Aorta (tissue), 5 donors: ENCODE measurements at regions of chr3 and their contacts with region 1.

Region 1: DNA sequence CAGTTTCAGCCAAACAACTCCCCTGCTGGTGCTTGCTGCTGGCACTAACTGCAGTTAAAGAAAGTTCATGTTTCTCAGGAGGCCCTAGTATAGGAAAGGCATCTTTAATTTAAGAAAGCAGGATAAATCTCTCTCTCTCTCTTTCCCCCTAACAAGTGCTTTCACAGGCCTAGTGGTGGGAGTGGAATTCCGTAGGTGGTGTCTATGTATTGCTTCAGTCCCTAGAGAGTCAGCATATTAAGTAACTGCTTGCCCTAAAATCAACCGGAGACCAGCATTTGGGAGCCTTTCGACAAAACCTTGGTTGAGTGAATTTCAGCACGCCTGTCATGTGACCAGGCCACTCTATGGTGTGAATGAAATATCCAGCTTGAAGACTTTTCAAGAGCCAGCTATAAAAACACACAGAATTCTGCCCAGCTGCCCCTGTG is 169.2 kb upstream of the TGFBR2 start:
- DNase-seq: peak in 1 of 2 donors; percentile 45
- ATAC-seq: peak; percentile 73
- H3K4me3 ChIP-seq: no peak overlapping the region
- H3K27ac ChIP-seq: peak overlapping the region; percentile 43 to 88
- H3K4me1 ChIP-seq: peaks cover 8 to 12% of the 10 kb centered on the region in 2 donors
- H3K27me3 ChIP-seq: no peaks in the 10 kb centered on the region

Region 2: GRCh38 chr3:30353711-30354467 is 83.3 kb before region 1 on chr3:
- intact Hi-C with region 1: loop called in 1 of 2 experiments (anchors 5 kb)
- DNase-seq: no peak
- ATAC-seq: peak; percentile 64
- H3K4me3 ChIP-seq: no peak overlapping the region
- H3K27ac ChIP-seq: peak overlapping the region; percentile 74 to 82
- H3K4me1 ChIP-seq: peaks cover 8 to 26% of the 10 kb centered on the region in 2 donors
- H3K27me3 ChIP-seq: no peaks in the 10 kb centered on the region

Region 3: GRCh38 chr3:30453360-30454039 is 16.3 kb after region 1 on chr3:
- intact Hi-C with region 1: no loop called
- DNase-seq: peak in 1 of 2 donors; percentile 47
- ATAC-seq: no peak
- H3K4me3 ChIP-seq: no peak overlapping the region
- H3K27ac ChIP-seq: no peak overlapping the region
- H3K4me1 ChIP-seq: no peaks in the 10 kb centered on the region
- H3K27me3 ChIP-seq: no peaks in the 10 kb centered on the region

Region 4: GRCh38 chr3:30518181-30518864 is 81.1 kb after region 1 on chr3:
- intact Hi-C with region 1: loop called (anchors 5 kb)
- DNase-seq: peak in 1 of 2 donors; percentile 56
- ATAC-seq: peak; percentile 92
- H3K4me3 ChIP-seq: no peak overlapping the region
- H3K27ac ChIP-seq: peak overlapping the region; percentile 67 to 80
- H3K4me1 ChIP-seq: peaks cover 2 to 20% of the 10 kb centered on the region in 2 donors
- H3K27me3 ChIP-seq: no peaks in the 10 kb centered on the region